ENCODE measurements at regions of chr5 and their contacts with region 1.

Region 1: DNA sequence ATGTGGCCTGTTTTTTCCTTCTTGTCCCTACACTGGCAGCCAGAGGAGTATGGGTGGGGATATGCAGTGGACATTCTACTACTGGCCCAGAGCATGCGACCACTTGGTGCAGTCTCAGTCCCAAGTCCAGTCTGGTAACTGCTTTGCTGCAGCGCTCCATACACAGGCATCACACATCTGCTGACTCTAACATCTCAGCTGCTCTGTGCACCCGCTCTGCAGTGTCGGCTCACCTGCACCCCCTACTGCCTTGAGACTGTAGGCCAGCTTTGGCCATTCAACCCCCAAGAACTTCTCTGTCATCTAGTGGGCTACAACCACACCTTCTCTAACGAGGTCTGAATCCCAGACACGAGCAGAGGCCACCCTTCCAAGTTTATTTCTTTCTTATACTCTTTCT is 46.4 kb upstream of the SLCO6A1 start:
- DNase-seq: peak; percentile 58 to 66
- H3K4me3 ChIP-seq: no peak overlapping the region
- H3K4me3 Mint-ChIP-seq: no peak overlapping the region
- H3K27ac Mint-ChIP-seq: no peak overlapping the region
- H3K4me1 ChIP-seq: no peaks in the 10 kb centered on the region
- H3K4me1 Mint-ChIP-seq: no peaks in the 10 kb centered on the region
- H3K27me3 ChIP-seq: no peaks in the 10 kb centered on the region
- H3K27me3 Mint-ChIP-seq: no peaks in the 10 kb centered on the region
- CTCF ChIP-seq: peak; percentile 61 to 79

Region 2: DNA sequence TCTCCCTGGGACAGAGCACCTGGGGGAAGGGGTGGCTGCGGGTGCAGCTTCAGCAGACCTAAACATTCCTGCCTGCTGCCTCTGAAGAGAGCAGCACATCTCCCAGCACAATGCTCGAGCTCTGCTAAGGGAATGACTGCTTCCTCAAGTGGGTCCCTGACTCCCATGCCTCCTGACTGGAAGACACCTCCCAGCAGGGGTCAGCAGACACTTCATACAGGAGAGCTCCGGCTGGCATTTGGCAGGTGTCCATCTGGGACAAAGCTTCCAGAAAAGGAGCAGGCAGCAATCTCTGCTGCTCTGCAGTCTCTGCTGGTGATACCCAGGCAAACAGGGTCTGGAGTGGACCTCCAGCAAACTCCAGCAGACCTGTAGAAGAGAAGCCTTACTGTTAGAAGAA is 123.5 kb before region 1 on chr5:
- CTCF ChIA-PET with region 1: interaction called, 4 read pairs
- POLR2A ChIA-PET with region 1: no interaction called
- intact Hi-C with region 1: loop called (anchors 1 kb)
- DNase-seq: peak; percentile 28 to 52
- H3K4me3 ChIP-seq: no peak overlapping the region
- H3K4me3 Mint-ChIP-seq: no peak overlapping the region
- H3K27ac Mint-ChIP-seq: no peak overlapping the region
- H3K4me1 ChIP-seq: no peaks in the 10 kb centered on the region
- H3K4me1 Mint-ChIP-seq: no peaks in the 10 kb centered on the region
- H3K27me3 ChIP-seq: no peaks in the 10 kb centered on the region; the same call in 1 of the 2 replicates
- H3K27me3 Mint-ChIP-seq: peaks cover 3% of the 10 kb centered on the region
- CTCF ChIP-seq: peak; percentile 32 to 46

Region 3: DNA sequence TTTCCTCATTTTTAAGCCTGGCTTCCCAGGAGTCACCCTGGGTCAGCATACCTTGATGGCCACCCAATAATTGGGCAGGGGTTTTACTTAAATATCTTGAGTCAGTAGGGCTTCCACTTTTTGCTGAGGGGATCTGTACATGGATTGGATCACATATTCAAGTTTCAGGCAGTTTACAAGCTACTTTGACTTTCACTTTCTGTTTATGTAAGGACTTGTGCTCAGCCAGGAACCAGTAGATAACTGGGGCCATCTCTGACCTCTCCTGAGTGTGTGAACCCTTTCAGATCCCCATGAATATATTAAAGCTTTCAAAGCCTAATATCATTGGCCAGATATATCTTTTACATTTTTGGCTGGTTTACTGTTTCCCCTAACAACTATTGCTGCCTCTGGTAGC is 91.5 kb before region 1 on chr5:
- CTCF ChIA-PET with region 1: no interaction called
- POLR2A ChIA-PET with region 1: no interaction called
- intact Hi-C with region 1: loop called (anchors 1 kb)
- DNase-seq: no peak
- H3K4me3 ChIP-seq: no peak overlapping the region
- H3K4me3 Mint-ChIP-seq: no peak overlapping the region
- H3K27ac Mint-ChIP-seq: no peak overlapping the region
- H3K4me1 ChIP-seq: no peaks in the 10 kb centered on the region
- H3K4me1 Mint-ChIP-seq: no peaks in the 10 kb centered on the region
- H3K27me3 ChIP-seq: no peaks in the 10 kb centered on the region
- H3K27me3 Mint-ChIP-seq: no peaks in the 10 kb centered on the region
- CTCF ChIP-seq: no peak

Measured in Caco-2 (cell line).